Activated T-helper 2 cell treated with anti-CD3 and anti-CD28 coated beads, Interferon-gamma antibody, Interleukin-2, Interleukin-4, amounts not matched to agents 10 μg/mL and 5 μg/mL and 100 μg/mL, durations not matched to agents 14 hours and 24 hours and 36 hours (primary cell): ENCODE measurements at regions of chr10 and their contacts with region 1.

Region 1: DNA sequence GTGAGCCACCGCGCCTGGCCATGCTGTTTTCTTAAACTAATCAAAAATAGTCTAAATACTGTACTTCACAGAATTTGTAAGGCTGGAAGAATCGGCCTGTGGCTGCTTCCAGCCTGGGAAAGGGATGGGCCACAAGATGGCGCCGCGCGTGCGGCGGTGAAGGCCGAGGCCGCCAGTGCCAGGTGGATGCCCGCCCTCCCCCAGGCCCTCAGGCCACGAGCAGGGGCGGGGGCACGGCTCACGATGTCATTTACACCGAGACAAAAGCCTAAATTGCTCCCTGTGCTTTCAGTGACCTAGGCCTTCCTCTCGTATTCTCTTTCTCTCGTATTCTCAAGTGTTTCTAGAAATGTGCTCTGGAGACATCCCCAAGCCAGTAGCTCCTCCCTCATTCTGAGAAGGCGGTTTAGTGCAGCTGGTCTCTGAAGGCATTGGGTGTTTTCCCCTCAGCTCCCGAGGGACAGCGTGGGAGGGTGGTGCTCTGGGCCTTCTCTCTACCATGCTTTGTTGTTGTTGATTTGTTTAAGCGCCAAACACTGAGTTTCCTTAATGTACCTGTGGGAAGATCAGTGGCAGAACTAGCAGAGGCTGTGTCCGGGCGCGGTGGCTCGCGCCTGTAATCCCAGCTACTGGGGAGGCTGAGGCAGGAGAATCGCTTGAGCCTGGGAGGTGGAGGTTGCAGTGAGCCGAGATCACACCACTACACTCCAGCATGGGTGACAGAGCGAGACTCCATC is 68.4 kb downstream of the CDC123 start:
- DNase-seq: peak; percentile 56
- H3K4me3 Mint-ChIP-seq: peak overlapping the region; percentile 75
- H3K27ac Mint-ChIP-seq: peak overlapping the region; percentile 85
- H3K4me1 Mint-ChIP-seq: peaks cover 17% of the 10 kb centered on the region
- H3K27me3 Mint-ChIP-seq: no peaks in the 10 kb centered on the region

Region 2: GRCh38 chr10:12322583-12323131 is 58.3 kb after region 1 on chr10:
- intact Hi-C with region 1: no loop called
- DNase-seq: no peak
- H3K4me3 Mint-ChIP-seq: no peak overlapping the region
- H3K27ac Mint-ChIP-seq: no peak overlapping the region
- H3K4me1 Mint-ChIP-seq: no peaks in the 10 kb centered on the region
- H3K27me3 Mint-ChIP-seq: peaks cover 4% of the 10 kb centered on the region

Region 3: DNA sequence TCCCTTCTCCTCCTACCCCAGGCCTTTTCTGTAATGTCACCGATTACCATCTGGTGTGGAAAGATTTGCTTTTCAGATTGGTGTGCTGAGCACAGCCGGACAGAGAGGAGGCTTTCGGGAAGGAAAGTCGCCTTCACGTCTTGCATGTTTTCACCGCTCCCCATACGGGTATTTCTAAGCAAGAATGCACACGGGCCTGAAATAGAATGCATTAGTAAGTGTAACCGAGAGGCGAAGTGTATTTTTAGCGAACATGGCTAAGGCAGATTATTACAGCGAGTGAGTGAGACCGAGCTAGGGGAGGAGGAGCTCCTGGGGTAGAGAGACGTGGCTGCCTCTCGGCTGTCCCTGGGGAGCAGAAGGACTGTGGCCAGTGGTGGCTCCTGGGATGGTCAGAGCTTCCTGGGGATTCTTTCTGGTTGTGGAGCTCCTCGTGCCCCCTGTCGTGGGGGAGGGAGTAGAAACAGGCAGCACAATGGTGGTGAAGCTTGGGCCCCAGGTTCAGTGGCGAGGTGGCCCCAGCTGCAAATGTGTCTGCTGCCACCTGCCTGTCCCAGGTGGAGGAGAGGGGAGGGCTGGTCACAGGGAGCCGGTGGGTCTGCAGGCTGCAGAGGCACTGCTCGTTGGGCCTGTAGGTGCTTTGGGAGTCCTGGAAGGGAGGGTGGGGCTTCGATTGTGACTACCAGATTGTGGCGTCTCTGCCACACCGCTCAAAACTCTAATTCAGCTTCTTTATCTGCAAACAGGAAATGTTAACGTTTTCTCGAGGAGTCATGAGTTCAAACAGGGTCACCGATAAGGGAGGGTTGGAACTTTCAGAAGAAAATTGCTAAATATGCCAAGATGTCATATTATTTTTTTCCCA is 220.8 kb after region 1 on chr10:
- intact Hi-C with region 1: loop called (anchors 10 kb)
- DNase-seq: no peak
- H3K4me3 Mint-ChIP-seq: no peak overlapping the region
- H3K27ac Mint-ChIP-seq: no peak overlapping the region
- H3K4me1 Mint-ChIP-seq: peaks cover 11% of the 10 kb centered on the region
- H3K27me3 Mint-ChIP-seq: no peaks in the 10 kb centered on the region

Region 4: GRCh38 chr10:12638103-12638502 is 373.7 kb after region 1 on chr10:
- intact Hi-C with region 1: loop called (anchors 1 kb)
- DNase-seq: peak; percentile 28
- H3K4me3 Mint-ChIP-seq: no peak overlapping the region
- H3K27ac Mint-ChIP-seq: peak overlapping the region; percentile 29
- H3K4me1 Mint-ChIP-seq: peaks cover 45% of the 10 kb centered on the region
- H3K27me3 Mint-ChIP-seq: no peaks in the 10 kb centered on the region

Region 5: DNA sequence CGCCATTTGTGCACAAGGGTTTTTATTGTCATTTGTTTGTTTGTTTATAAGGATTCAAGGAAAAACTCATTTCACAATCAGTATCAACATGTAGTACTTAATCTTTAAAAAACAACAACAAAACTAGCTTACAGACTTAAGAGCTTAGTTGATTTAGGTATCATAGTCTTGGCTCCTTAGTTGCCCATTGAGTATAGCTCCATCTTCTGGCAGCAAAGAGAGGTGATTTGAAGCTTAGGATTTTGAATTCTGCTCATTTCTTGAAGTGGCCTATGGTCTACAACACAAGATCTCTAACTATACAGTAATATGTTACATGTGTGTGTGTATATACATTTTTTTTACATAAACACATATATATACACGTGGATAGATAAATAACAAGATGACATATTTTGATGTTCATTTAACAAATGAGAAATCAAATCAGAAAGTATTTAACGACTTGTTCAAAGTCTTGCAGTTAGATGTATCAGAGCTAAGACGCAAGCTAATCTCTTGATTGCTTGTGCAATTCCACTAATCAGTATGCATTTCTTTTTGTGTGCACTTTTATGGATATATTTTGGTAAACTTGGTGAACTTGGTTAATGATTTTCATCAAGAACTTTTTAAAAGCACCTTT is 392.3 kb after region 1 on chr10:
- intact Hi-C with region 1: loop called (anchors 1 kb)
- DNase-seq: no peak
- H3K4me3 Mint-ChIP-seq: no peak overlapping the region
- H3K27ac Mint-ChIP-seq: no peak overlapping the region
- H3K4me1 Mint-ChIP-seq: peaks cover 18% of the 10 kb centered on the region
- H3K27me3 Mint-ChIP-seq: no peaks in the 10 kb centered on the region